ENCODE measurements at regions of chr6 and their contacts with region 1.

Region 1: GRCh38 chr6:83067448-83068413 is at the start of gene DOP1A:
- DNase-seq: peak; percentile 95
- H3K4me3 ChIP-seq: peak within 1 kb of the TSS; percentile 85 to 94
- H3K27ac ChIP-seq: peak within 1 kb of the TSS; percentile 93 to 94
- H3K4me1 ChIP-seq: peaks cover 7% of the 10 kb centered on the region
- H3K27me3 ChIP-seq: no peaks in the 10 kb centered on the region
- CTCF ChIP-seq: peak; percentile 95 to 97 (median 96)
- POLR2A ChIP-seq: peak; percentile 72
- total RNA-seq, gene DOP1A: 27.6 to 55.2 TPM

Region 2: DNA sequence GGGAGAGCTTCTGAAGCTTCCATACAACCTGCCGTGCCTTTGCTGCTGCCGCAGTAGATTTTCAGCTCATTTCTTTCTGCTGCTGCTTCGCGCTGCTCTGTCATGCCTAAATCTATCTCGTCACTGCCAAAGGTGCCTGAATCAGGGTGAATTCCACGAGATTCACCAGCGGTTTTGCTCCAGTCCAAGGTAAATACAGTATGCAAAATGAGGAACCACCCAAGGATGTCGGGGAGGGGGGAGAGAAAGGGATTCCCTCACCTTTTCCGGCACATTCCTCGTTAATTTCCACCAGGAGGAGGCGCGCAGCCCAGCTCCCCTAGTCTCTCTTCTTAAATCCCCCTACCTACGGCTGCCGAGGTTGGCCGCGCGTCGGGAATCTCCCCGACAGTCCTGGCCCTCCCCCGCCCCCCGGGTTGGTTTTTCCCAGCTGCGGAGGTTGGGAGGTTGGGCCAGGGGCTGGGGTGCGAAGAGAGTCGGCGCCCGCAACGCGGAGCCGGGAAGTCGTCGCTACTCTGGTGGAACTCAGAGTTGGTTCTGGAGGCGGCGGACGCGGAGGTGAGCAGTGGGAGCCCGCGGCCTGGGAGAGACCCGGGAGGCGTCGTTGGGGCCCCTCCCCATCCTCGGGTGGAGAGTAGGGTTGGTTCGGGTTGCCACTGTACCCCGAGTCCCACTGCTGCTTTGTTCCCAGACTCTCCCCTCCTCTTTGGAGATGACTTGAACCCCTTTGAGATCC is 704.2 kb before region 1 on chr6 and contains the start of gene TPBG:
- intact Hi-C with region 1: loop called (anchors 5 kb)
- DNase-seq: peak; percentile 42
- H3K4me3 ChIP-seq: peak within 1 kb of the TSS; percentile 65 to 67
- H3K27ac ChIP-seq: peak within 1 kb of the TSS; percentile 80
- H3K4me1 ChIP-seq: no peaks in the 10 kb centered on the region
- H3K27me3 ChIP-seq: no peaks in the 10 kb centered on the region
- CTCF ChIP-seq: peak in 2 of 4 experiments; percentile 24 to 33
- POLR2A ChIP-seq: peak; percentile 77
- total RNA-seq, gene TPBG: 21.0 to 24.7 TPM

Region 3: GRCh38 chr6:83192871-83193746 is 125.4 kb after region 1 on chr6 and contains the starts of genes PGM3 and RWDD2A:
- intact Hi-C with region 1: loop called (anchors 5 kb)
- DNase-seq: peak; percentile 91
- H3K4me3 ChIP-seq: peak within 1 kb of the TSS; percentile 93 to 95
- H3K27ac ChIP-seq: peak within 1 kb of the TSS; percentile 86 to 88
- H3K4me1 ChIP-seq: peaks cover 3% of the 10 kb centered on the region
- H3K27me3 ChIP-seq: no peaks in the 10 kb centered on the region
- CTCF ChIP-seq: peak in 2 of 4 experiments; percentile 32 to 38
- POLR2A ChIP-seq: peak; percentile 94
- total RNA-seq, gene PGM3: 31.6 to 74.8 TPM
- total RNA-seq, gene RWDD2A: 9.5 to 23.7 TPM

Region 4: GRCh38 chr6:83215131-83216047 is 147.7 kb after region 1 on chr6:
- intact Hi-C with region 1: loop called (anchors 2 kb)
- DNase-seq: peak; percentile 66
- H3K4me3 ChIP-seq: no peak overlapping the region
- H3K27ac ChIP-seq: no peak overlapping the region
- H3K4me1 ChIP-seq: no peaks in the 10 kb centered on the region
- H3K27me3 ChIP-seq: no peaks in the 10 kb centered on the region
- CTCF ChIP-seq: peak; percentile 37 to 79 (median 60)
- POLR2A ChIP-seq: no peak

Region 5: GRCh38 chr6:83429857-83430610 is 362.3 kb after region 1 on chr6:
- intact Hi-C with region 1: loop called (anchors 10 kb)
- DNase-seq: peak; percentile 15
- H3K4me3 ChIP-seq: peak overlapping the region; percentile 53 to 57
- H3K27ac ChIP-seq: peak overlapping the region; percentile 63 to 65
- H3K4me1 ChIP-seq: no peaks in the 10 kb centered on the region
- H3K27me3 ChIP-seq: no peaks in the 10 kb centered on the region
- CTCF ChIP-seq: no peak
- POLR2A ChIP-seq: no peak

Region 6: GRCh38 chr6:83514866-83515466 is 447.2 kb after region 1 on chr6:
- intact Hi-C with region 1: loop called (anchors 5 kb)
- DNase-seq: peak; percentile 23
- H3K4me3 ChIP-seq: no peak overlapping the region
- H3K27ac ChIP-seq: no peak overlapping the region
- H3K4me1 ChIP-seq: no peaks in the 10 kb centered on the region
- H3K27me3 ChIP-seq: no peaks in the 10 kb centered on the region
- CTCF ChIP-seq: peak; percentile 75 to 84 (median 80)
- POLR2A ChIP-seq: no peak

Measured in prostate gland (tissue), 2 donors.